Mucosa of descending colon (tissue), 3 donors: ENCODE measurements at regions of chr14 and their contacts with region 1.

Region 1: GRCh38 chr14:31084385-31084784 is 58.2 kb upstream of the STRN3 start:
- DNase-seq: peak in 1 of 3 donors; percentile 12
- ATAC-seq: no peak
- H3K4me3 ChIP-seq: no peak overlapping the region
- H3K4me1 ChIP-seq: peaks cover 2% of the 10 kb centered on the region
- CTCF ChIP-seq: no peak

Region 2: DNA sequence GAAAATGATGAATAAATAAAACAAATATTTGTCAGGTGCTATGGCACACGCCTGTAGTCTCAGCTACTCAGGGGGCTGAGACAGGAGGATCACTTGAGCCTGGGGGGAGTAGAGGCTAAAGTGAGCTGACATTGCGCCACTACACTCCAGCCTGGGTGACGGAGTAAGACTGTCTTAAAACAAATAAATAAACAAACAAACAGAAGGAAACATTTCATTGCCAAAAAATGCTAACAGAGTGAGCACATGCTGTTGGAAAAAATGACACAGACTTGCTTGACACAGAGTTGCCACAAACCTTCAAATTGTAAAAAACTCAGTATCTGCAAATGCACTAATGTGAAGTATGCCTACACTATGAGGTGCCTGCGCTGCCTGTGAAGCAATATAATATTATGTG is 109.8 kb before region 1 on chr14:
- intact Hi-C with region 1: loop called in 1 of 2 experiments (anchors 5 kb)
- DNase-seq: no peak
- ATAC-seq: no peak
- H3K4me3 ChIP-seq: no peak overlapping the region
- H3K4me1 ChIP-seq: peaks cover 6% of the 10 kb centered on the region
- CTCF ChIP-seq: no peak

Region 3: DNA sequence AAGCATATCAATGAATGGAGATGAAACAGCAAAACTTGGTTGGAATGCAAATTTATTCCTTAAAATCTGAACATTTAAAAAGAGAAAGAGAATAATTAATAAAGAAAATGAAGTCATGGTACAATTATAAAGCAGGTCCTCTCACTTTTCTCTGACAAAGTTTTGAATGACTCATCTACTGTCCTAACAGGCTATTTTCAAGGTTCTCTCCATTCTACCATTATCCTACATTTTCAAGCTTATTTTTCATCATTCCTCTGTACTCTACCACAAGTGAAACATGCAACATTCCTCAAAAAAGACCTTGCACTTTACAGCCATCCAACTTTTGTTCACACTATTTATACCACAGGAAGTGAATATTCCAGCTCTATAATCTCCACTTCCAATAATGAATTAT is 95.9 kb before region 1 on chr14:
- intact Hi-C with region 1: loop called in 1 of 2 experiments (anchors 10 kb)
- DNase-seq: no peak
- ATAC-seq: no peak
- H3K4me3 ChIP-seq: no peak overlapping the region
- H3K4me1 ChIP-seq: peaks cover 15% of the 10 kb centered on the region
- CTCF ChIP-seq: no peak

Region 4: DNA sequence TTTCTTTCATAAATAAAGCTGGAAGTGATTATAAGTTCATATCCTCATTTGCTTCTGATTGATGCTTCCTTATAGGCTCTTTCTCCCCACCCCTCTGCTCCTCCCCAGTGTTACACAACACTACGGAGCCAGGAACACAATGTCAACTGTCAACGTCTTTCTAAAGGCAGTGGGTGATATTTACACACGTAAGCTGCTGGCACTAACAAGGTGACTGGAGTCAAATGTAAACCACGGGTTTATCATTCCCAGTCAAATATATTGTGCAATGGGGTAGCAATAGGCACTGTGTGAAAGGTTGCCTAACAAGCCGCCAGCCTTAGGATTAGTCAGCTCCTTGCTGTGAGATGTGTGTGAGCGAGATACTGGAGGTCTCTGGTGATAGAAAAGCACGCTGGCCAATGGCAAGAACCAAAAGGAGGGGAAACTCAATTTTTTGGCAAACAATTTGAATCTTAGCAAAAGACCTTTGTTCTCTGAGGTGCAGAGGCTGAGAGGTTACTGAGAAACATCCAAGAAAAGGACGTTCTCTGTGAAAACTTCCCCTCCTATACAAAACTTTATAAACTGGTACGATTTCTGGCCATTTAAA is 145.3 kb after region 1 on chr14:
- intact Hi-C with region 1: no loop called
- DNase-seq: peak in 2 of 3 donors; percentile 53 to 82
- ATAC-seq: peak; percentile 98
- H3K4me3 ChIP-seq: no peak overlapping the region
- H3K4me1 ChIP-seq: peaks cover 6% of the 10 kb centered on the region
- CTCF ChIP-seq: no peak